Heart right ventricle (tissue), 16 donors: ENCODE measurements at regions of chr14 and their contacts with region 1.

Region 1: DNA sequence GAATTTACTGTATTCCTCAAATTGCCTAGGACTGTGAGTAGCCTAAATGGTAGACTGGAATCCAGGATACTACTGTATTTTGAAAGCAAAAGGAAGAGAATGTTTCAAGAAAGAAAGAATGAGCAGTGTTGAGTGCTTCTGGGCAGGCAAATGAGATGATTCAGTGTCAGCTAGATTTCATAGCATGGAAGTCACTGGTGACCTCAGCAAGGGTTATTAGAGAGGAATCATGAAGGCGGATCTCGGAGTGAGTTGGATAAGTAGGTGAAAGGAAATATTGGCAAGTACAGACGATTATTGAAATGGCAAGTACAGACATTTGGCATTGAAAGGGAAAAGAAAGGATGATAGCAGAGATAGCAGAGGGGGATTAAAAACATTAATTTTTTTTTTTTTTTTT is 27.1 kb downstream of the VRK1 start:
- DNase-seq: no peak
- ATAC-seq: no peak
- H3K4me3 ChIP-seq: no peak overlapping the region
- H3K27ac ChIP-seq: no peak overlapping the region
- H3K4me1 ChIP-seq: peaks cover 0 to 11% (median 0%) of the 10 kb centered on the region in 9 donors
- H3K27me3 ChIP-seq: no peaks in the 10 kb centered on the region
- CTCF ChIP-seq: no peak

Region 2: DNA sequence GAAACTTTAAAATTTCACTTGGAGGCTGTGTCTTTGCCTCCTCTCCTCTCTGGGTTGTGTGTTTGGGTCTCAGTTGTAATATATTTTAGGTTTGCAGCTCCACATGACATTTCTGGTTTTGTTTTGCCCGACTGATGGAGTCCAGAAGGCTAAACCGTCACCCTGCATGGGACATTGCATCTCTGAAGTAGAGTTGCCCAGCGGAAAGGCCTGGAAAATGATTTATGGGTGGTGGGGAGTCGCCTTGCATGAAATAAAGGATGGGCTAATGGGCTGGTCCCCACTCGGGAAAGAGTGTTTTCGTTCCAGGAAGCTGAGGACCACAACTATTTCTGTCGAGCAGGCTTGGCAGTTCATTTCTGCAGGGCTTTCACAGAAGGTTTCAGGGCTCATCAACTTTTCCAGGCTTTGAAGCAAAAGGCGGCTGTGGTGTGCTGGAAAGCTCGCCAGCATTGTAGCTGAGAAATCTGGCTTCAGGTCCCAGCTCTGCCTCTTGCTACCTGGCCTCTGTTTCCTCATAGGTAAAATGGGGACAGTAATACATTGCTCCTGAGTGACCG is 1979.6 kb before region 1 on chr14:
- intact Hi-C with region 1: loop called in 1 of 10 experiments (anchors 5 kb)
- DNase-seq: no peak
- ATAC-seq: no peak
- H3K4me3 ChIP-seq: no peak overlapping the region
- H3K27ac ChIP-seq: no peak overlapping the region
- H3K4me1 ChIP-seq: no peaks in the 10 kb centered on the region
- H3K27me3 ChIP-seq: peaks cover 0 to 9% (median 0%) of the 10 kb centered on the region in 7 donors
- CTCF ChIP-seq: no peak